Caco-2 (cell line): ENCODE measurements at regions of chr21 and their contacts with region 1.

Region 1: DNA sequence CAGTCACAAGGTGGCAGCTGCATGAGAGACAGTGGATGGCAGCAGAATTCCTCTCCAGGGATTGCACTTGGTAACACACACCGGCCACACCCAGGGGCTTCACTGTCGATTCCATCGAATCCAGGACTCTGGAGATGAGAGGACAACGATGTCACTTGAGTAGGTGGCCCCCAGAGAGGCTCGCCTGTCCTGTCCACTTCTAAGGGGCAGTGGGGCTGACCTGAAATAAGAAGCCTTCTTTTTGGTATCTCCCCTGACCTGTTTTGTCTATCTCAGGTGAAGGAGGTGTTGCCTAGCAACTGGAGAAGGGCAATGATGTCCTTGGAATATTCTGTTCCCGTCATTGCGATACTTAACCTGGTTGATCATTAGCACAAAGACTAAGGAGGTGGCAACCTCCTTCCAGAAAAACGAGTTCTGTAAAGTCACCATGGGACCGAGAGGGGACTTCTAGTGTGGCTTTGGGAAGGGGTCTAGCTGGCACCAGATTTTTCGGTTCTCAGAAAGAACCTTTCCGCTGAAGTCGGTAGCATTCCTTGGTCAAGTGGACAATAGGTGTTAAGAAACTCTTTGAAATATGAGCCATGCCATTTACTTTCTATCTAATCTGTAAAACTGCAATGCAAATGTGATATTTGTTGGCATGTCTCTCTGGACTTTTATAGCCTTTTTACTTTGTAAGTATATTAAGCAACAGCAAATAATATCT is 85.2 kb upstream of the TMPRSS2 start:
- DNase-seq: peak; percentile 84 to 85
- H3K4me3 ChIP-seq: no peak overlapping the region
- H3K4me3 Mint-ChIP-seq: peak overlapping the region; percentile 15
- H3K27ac Mint-ChIP-seq: peak overlapping the region; percentile 93
- H3K4me1 ChIP-seq: peaks cover 47% of the 10 kb centered on the region
- H3K4me1 Mint-ChIP-seq: peaks cover 39% of the 10 kb centered on the region
- H3K27me3 ChIP-seq: no peaks in the 10 kb centered on the region
- H3K27me3 Mint-ChIP-seq: no peaks in the 10 kb centered on the region
- CTCF ChIP-seq: no peak

Region 2: GRCh38 chr21:41322487-41323382 is 270.5 kb before region 1 on chr21:
- CTCF ChIA-PET with region 1: no interaction called
- POLR2A ChIA-PET with region 1: no interaction called
- intact Hi-C with region 1: loop called (anchors 1 kb)
- DNase-seq: peak; percentile 90 to 94
- H3K4me3 ChIP-seq: peak overlapping the region; percentile 43
- H3K4me3 Mint-ChIP-seq: peak overlapping the region; percentile 79
- H3K27ac Mint-ChIP-seq: peak overlapping the region; percentile 92
- H3K4me1 ChIP-seq: peaks cover 52% of the 10 kb centered on the region
- H3K4me1 Mint-ChIP-seq: peaks cover 28% of the 10 kb centered on the region
- H3K27me3 ChIP-seq: no peaks in the 10 kb centered on the region
- H3K27me3 Mint-ChIP-seq: no peaks in the 10 kb centered on the region
- CTCF ChIP-seq: no peak

Region 3: GRCh38 chr21:41497803-41498202 is 95.4 kb before region 1 on chr21:
- CTCF ChIA-PET with region 1: no interaction called
- POLR2A ChIA-PET with region 1: no interaction called
- intact Hi-C with region 1: loop called (anchors 1 kb)
- DNase-seq: peak; percentile 43 to 58
- H3K4me3 ChIP-seq: no peak overlapping the region
- H3K4me3 Mint-ChIP-seq: peak overlapping the region; percentile 43
- H3K27ac Mint-ChIP-seq: peak overlapping the region; percentile 80
- H3K4me1 ChIP-seq: peaks cover 67% of the 10 kb centered on the region
- H3K4me1 Mint-ChIP-seq: peaks cover 64% of the 10 kb centered on the region
- H3K27me3 ChIP-seq: no peaks in the 10 kb centered on the region
- H3K27me3 Mint-ChIP-seq: no peaks in the 10 kb centered on the region
- CTCF ChIP-seq: no peak

Region 4: DNA sequence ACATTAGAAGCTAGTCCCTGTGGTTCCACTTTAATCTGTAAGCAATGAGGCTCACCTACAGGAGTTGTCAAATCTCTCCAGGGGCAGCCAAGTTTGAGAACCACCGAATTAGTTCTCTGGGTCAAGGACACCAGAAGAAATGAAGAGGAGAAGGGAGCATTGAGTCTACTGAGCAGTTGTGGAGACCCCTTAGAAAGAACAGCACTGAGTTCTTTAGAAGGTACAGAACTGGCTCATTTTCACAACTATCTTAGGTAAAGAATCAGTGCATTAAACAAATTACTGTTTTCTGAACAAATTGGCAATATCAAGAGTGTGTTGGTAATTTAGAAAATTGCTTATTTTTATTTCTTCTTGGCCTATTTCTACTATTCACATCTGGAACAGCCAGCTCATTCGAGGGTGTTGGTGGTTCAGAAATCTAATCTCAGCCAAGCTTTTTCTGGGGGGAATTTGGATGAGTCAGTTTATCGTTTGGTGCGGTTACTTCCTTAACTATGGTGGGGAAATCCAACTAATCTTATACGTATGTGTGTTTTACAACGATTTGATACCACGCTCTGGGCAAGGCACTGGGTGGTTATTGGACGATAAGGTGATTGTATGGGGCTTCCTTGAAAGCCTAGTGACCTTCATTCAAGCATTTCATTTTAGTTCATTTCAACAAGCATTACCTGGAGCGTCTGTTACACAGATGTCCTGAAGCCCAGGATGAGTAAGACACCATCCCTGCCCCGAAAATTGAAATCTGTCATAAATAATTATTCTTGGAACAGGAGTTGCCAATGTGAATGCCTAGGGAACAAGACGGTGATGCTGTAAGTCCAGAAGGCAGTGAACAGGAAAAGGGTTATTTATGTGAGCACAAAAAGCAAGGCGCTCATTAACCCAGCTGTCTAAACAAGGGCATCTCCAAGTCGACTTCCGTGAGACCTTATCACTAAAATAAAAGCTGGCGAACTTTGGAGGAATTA is 33.3 kb before region 1 on chr21:
- CTCF ChIA-PET with region 1: no interaction called
- POLR2A ChIA-PET with region 1: no interaction called
- intact Hi-C with region 1: loop called (anchors 5 kb)
- DNase-seq: no peak
- H3K4me3 ChIP-seq: no peak overlapping the region
- H3K4me3 Mint-ChIP-seq: no peak overlapping the region
- H3K27ac Mint-ChIP-seq: no peak overlapping the region
- H3K4me1 ChIP-seq: peaks cover 5% of the 10 kb centered on the region; the same call in 1 of the 2 replicates
- H3K4me1 Mint-ChIP-seq: peaks cover 8% of the 10 kb centered on the region
- H3K27me3 ChIP-seq: no peaks in the 10 kb centered on the region
- H3K27me3 Mint-ChIP-seq: no peaks in the 10 kb centered on the region
- CTCF ChIP-seq: no peak

Region 5: GRCh38 chr21:41741253-41742072 is 148.3 kb after region 1 on chr21:
- CTCF ChIA-PET with region 1: no interaction called
- POLR2A ChIA-PET with region 1: no interaction called
- intact Hi-C with region 1: no loop called
- DNase-seq: no peak
- H3K4me3 ChIP-seq: no peak overlapping the region
- H3K4me3 Mint-ChIP-seq: no peak overlapping the region
- H3K27ac Mint-ChIP-seq: no peak overlapping the region
- H3K4me1 ChIP-seq: no peaks in the 10 kb centered on the region
- H3K4me1 Mint-ChIP-seq: no peaks in the 10 kb centered on the region
- H3K27me3 ChIP-seq: no peaks in the 10 kb centered on the region
- H3K27me3 Mint-ChIP-seq: no peaks in the 10 kb centered on the region
- CTCF ChIP-seq: no peak